Posterior vena cava (tissue), 2 donors: ENCODE measurements at regions of chr13 and their contacts with region 1.

Region 1: GRCh38 chr13:32586080-32586900 is at the start of gene PDS5B:
- DNase-seq: peak; percentile 98
- total RNA-seq, gene PDS5B: 38.8 to 43.1 TPM

Region 2: GRCh38 chr13:31846182-31846950 is 739.9 kb before region 1 on chr13:
- intact Hi-C with region 1: no loop called
- DNase-seq: peak; percentile 95

Region 3: GRCh38 chr13:32205431-32206096 is 380.7 kb before region 1 on chr13:
- intact Hi-C with region 1: no loop called
- DNase-seq: no peak

Region 4: GRCh38 chr13:32381539-32381938 is 204.8 kb before region 1 on chr13:
- intact Hi-C with region 1: loop called in 1 of 2 experiments (anchors 10 kb)
- DNase-seq: no peak

Region 5: GRCh38 chr13:32639502-32640105 is 53.3 kb after region 1 on chr13:
- intact Hi-C with region 1: loop called in 1 of 2 experiments (anchors 5 kb)
- DNase-seq: no peak

Region 6: GRCh38 chr13:33730147-33730546 is 1143.9 kb after region 1 on chr13:
- intact Hi-C with region 1: loop called in 1 of 2 experiments (anchors 10 kb)
- DNase-seq: no peak